MCF 10A (cell line): ENCODE measurements at regions of chr16 and their contacts with region 1.

Region 1: DNA sequence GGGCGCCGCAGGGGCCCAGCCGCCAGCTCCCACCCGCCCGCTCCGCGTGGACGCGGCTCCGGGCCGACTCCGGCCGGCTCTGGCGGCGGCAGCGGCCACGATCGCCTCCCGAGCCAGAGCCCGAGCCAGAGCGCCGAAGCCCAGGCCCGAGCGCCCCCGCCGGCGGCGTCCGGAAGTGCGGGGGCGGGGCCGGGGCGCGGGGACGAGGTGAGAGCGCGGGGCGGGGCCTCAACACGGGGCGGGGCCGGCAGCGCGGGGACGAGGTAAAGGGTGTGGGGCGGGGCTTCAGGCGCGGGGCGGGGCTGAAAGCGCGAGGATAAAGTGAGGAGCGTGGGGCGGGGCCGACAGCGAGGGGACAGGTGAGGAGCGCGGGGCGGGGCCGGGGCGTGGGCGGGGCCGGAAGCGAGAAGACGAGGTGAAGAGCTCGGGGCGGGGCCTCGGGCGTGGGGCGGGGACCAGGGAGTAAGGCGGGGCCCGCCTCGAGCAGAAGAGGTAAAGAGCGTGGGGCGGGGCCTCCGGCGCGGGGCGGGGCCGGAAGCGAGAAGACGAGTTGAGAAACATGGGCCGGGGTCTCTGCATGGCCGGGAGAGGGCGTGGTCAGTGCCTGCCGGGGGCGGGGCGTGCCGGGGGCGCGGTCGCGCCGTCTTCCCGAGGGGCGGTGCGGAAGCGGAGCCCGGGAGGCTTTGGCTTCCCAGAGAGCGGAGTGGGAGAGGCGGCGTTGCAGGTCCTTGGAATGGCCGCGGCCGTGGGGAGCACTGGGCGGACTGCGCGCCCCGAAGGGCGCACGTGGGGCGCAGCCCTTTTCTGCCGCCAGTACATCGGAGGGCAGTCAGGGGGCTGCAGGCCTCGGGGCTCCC is at the start of gene AXIN1:
- DNase-seq: peak; percentile 99
- H3K4me3 Mint-ChIP-seq: peak within 1 kb of the TSS; percentile 74
- H3K27ac Mint-ChIP-seq: peak within 1 kb of the TSS; percentile 39
- H3K4me1 Mint-ChIP-seq: peaks cover 13% of the 10 kb centered on the region
- H3K27me3 Mint-ChIP-seq: no peaks in the 10 kb centered on the region
- CTCF ChIP-seq: peak; percentile 50
- total RNA-seq, gene AXIN1: 37.0 and 43.7 TPM in 2 replicates

Region 2: DNA sequence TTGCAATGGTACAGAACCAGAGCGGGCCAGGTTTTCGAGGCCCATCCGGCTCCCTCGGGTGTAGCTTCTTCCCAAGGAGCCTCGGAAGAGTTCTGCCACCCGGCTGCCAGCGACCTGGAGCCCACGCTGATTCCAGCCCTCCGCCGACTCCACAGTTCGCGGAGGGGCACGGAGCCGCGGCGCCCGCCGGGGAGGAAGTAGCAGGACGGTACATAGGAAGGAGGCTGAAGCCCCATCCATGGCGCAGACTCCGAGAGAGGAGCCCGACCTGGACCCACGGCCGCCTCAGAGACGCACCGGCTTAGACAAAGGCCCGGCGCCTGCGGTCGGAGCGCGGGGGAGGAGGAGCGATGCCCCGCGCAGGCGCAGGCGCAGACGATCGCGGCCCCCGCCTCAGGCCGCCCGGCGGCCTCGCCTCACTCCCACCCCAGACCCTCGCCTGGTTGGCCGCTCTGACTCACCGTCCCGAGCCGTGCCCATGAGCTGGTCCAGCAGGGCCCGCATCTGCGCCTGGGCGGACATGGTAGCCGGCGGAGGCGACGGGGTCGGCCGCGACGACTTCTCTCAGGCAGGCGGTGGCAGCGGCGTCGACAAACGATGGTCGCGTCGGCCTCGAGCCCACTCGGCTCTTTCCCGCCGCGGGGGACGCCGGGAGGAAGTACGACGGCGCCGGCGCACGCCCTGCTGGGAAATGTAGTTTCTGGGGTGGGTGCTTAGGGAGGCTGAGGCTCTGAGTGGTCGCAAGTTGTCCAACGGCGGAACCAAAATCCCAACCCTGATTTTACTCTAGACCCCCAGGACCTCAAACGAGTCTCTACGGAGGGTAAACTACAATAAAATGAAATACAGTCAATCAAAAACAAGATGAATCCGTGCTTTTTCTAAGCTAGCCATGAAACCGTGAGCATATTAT is 123.7 kb before region 1 on chr16 and contains the start of gene LUC7L:
- CTCF ChIA-PET with region 1: interaction called, 4 read pairs
- POLR2A ChIA-PET with region 1: interaction called, 16 read pairs
- intact Hi-C with region 1: no loop called
- DNase-seq: peak; percentile 85
- H3K4me3 Mint-ChIP-seq: peak within 1 kb of the TSS; percentile 87
- H3K27ac Mint-ChIP-seq: peak within 1 kb of the TSS; percentile 84
- H3K4me1 Mint-ChIP-seq: peaks cover 5% of the 10 kb centered on the region
- H3K27me3 Mint-ChIP-seq: no peaks in the 10 kb centered on the region
- CTCF ChIP-seq: no peak
- total RNA-seq, gene LUC7L: 58.9 and 74.1 TPM in 2 replicates

Region 3: DNA sequence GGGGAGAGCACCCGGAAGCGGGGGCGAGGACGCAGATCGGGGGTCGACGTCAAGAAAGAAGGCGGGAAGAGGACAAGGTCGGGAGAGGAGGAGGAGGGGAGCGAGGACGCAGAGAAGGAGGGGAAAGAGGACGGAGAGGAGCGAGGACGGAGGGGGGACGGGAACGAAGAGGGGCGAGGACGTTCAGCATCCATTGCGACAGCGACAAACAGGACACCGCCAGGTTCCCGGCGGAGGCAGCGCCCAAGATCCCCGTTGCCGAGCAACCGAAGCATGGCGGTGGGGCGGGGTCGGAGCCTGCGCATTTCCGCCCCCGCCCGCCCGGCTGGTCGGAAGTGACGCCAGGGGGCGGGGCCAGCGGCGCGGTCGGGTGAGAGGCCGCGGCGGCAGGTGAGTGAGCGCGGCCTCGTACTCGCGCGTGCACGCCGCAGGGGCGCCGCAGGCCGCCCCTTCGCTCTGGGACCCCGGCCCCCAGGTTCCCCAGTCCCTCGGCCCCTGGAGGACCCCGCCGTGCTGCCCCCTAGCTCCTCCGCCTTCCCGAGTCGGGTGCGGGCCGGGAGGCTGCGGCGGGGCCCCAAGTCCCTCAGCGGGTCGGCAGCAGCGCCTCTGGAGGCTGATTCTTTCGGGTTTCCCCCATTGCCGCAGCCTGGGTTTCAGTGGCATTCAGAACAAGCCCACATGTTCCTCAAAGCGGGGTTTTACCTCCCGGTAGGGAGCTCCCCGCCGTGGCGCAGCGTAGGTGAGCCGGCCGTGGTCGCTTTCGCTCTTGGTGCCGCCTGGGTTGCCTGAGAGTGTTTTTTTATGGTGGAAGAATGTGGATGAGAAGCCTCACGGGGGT is 118.1 kb before region 1 on chr16 and contains the start of gene FAM234A:
- CTCF ChIA-PET with region 1: interaction called, 3 read pairs
- POLR2A ChIA-PET with region 1: interaction called, 20 read pairs
- intact Hi-C with region 1: no loop called
- DNase-seq: peak; percentile 91
- H3K4me3 Mint-ChIP-seq: peak within 1 kb of the TSS; percentile 98
- H3K27ac Mint-ChIP-seq: peak within 1 kb of the TSS; percentile 98
- H3K4me1 Mint-ChIP-seq: no peaks in the 10 kb centered on the region
- H3K27me3 Mint-ChIP-seq: no peaks in the 10 kb centered on the region
- CTCF ChIP-seq: peak; percentile 37
- total RNA-seq, gene FAM234A: 61.2 and 67.3 TPM in 2 replicates

Region 4: DNA sequence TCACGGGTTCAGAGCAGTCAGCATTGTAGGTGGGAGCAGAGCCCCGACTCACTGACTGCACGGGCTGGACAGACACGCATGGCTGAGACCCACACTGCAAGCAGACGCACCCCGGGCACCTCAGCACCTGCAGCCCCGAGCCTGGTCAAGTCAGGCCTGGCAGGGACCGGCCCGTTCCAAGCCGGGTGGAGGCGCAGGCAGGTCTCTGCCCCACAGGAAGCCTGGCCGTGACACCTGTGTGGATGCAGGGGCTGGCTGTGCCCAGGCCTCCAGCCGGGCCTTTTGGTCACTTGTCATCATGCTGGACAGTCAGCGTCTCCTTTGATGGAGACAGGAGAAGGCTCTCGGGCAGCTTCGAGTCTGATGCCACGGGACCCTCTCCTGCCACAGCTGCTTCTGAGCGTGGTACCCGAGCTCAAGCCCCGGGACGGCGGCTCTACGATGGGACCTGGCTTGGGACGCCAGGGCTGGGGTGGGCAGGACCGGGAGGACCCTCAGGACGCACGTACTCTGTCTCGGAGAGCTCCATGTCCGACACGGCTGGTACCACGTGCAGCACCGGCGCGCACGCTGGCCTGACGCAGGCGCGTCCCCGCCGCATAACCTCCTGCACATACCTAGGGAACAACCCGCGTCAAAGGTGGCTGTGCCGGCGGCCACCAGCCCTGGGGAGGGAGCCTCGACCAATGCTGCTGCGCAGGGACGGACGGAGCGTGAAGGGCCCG is 61.9 kb before region 1 on chr16:
- CTCF ChIA-PET with region 1: no interaction called
- POLR2A ChIA-PET with region 1: no interaction called
- intact Hi-C with region 1: no loop called
- DNase-seq: no peak
- H3K4me3 Mint-ChIP-seq: no peak overlapping the region
- H3K27ac Mint-ChIP-seq: no peak overlapping the region
- H3K4me1 Mint-ChIP-seq: no peaks in the 10 kb centered on the region
- H3K27me3 Mint-ChIP-seq: no peaks in the 10 kb centered on the region
- CTCF ChIP-seq: no peak

Region 5: DNA sequence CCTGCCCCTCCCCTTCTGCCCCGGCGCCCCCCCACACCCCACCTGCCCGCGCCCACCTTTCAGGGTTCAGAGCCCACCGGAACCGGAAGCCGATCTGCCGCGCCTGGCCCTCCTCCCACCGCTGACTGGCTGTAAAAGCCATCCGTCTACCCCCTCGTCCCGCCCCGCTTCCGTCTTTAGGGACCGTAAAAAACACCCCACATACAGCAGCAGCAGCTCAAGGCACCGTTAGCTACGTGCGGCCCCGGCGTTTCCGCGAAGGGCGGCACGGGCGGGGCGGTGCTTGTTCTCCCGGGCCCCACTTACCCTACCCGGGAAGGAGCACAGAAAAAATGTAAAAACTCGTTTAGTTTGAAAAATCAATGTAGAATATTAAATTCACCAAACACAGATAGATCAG is 17.7 kb after region 1 on chr16 and contains the start of gene MRPL28:
- CTCF ChIA-PET with region 1: interaction called, 5 read pairs
- POLR2A ChIA-PET with region 1: interaction called, 13 read pairs
- intact Hi-C with region 1: no loop called
- DNase-seq: peak; percentile 93
- H3K4me3 Mint-ChIP-seq: peak within 1 kb of the TSS; percentile 81
- H3K27ac Mint-ChIP-seq: peak within 1 kb of the TSS; percentile 90
- H3K4me1 Mint-ChIP-seq: no peaks in the 10 kb centered on the region
- H3K27me3 Mint-ChIP-seq: no peaks in the 10 kb centered on the region
- CTCF ChIP-seq: no peak
- total RNA-seq, gene MRPL28: 105 and 121 TPM in 2 replicates

Region 6: DNA sequence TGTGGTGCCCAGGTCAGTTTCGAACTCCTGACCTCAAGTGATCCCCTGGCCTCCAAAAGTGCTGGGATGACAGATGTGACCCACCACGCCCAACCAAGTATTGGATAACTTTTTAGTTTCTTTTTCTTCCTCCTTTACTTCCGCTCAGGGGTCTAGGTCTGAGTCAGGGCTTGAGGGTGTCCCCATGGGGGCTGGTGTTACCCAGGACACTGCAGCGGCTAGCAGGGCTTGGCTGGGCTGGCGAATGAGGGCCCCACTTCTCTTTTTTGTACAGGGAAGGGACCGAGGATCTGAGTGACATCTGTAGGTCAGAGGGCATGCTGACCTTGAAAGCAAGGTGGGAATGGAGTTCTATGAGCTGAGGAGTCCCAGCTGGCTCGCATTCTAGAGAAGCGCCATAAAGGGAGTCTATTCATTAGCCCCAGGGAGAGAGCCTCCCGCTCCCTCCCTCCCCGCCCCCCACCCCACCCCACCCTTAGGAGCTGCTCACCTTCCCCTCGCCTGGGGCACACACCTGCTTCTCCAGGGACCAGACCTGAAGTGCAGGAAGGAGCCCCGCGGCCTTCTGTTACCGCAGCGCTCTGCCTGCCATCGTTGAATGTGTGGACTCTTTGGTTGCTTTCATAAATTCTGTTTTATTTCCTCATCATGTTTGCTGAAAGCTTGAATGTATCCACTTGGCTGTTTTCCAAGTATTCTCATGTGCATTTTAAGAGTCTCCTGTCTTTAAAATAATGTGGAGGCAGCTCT is 97.8 kb after region 1 on chr16:
- CTCF ChIA-PET with region 1: no interaction called
- POLR2A ChIA-PET with region 1: no interaction called
- intact Hi-C with region 1: no loop called
- DNase-seq: no peak
- H3K4me3 Mint-ChIP-seq: no peak overlapping the region
- H3K27ac Mint-ChIP-seq: no peak overlapping the region
- H3K4me1 Mint-ChIP-seq: peaks cover 6% of the 10 kb centered on the region
- H3K27me3 Mint-ChIP-seq: no peaks in the 10 kb centered on the region
- CTCF ChIP-seq: no peak